Stomach (tissue), 19 donors: ENCODE measurements at regions of chr14 and their contacts with region 1.

Region 1: DNA sequence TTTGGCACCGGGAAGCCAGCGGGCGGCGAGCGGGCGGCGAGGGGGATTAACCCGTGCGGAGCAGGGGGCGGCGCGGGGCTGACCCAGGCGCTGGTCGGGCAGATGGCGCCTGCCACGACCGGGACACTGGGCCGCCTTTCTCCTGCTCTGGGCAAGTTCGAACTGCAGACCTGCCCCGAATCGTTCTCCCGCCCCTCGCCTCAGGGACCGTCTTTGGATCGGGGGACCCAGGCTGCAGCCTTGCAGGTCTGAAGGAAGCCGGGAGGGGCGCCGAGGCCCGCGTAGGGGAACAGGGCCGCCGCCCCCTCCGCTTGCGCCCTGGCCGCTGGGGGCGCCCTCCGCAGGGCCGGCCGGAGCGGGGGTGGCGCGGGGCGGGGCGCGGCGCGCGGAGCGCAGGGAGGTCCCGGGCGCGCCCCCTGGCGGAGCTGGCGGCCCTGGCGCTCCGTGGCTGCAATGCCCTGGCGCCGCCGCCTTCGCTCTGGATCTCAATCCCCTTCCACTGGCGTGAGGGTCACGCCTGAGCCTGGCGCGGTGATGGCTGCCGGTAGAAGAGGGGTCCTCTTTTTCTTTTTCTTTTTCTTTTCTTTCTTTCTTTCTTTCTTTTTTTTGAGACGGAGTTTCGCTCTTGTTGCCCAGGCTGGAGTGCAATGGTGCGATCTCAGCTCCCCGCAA is 449 bp upstream of the LTBP2 start:
- DNase-seq: peak; percentile 81 to 94
- H3K4me3 ChIP-seq: peak overlapping the region; percentile 53 to 85 (median 67)
- H3K27ac ChIP-seq: peak overlapping the region; percentile 9 to 70 (median 47)
- H3K4me1 ChIP-seq: peaks cover 20 to 62% (median 41%) of the 10 kb centered on the region in 4 donors
- H3K27me3 ChIP-seq: peaks cover 0 to 29% (median 12%) of the 10 kb centered on the region in 3 donors
- CTCF ChIP-seq: peak in 5 of 7 experiments; percentile 6 to 89 (median 54)
- EP300 ChIP-seq: no peak
- POLR2A ChIP-seq: no peak

Region 2: GRCh38 chr14:74501135-74501614 is 111.3 kb before region 1 on chr14:
- intact Hi-C with region 1: loop called (anchors 5 kb)
- DNase-seq: peak; percentile 70 to 92
- H3K4me3 ChIP-seq: no peak overlapping the region
- H3K27ac ChIP-seq: peak overlapping the region in 1 of 5 donors; percentile 66
- H3K4me1 ChIP-seq: peaks cover 0 to 14% (median 8%) of the 10 kb centered on the region in 4 donors
- H3K27me3 ChIP-seq: no peaks in the 10 kb centered on the region
- CTCF ChIP-seq: peak in 5 of 7 experiments; percentile 26 to 59 (median 51)
- EP300 ChIP-seq: no peak
- POLR2A ChIP-seq: no peak